ENCODE measurements at regions of chr18 and their contacts with region 1.

Region 1: GRCh38 chr18:13800505-13801259 is 23.3 kb upstream of the MC5R start:
- DNase-seq: peak; percentile 55
- ATAC-seq: peak; percentile 98
- H3K4me3 ChIP-seq: peak overlapping the region; percentile 22 to 49
- H3K27ac ChIP-seq: no peak overlapping the region
- H3K4me1 ChIP-seq: peaks cover 16 to 27% of the 10 kb centered on the region in 2 experiments
- H3K27me3 ChIP-seq: no peaks in the 10 kb centered on the region
- CTCF ChIP-seq: peak; percentile 55 to 66 (median 63); a peak in 5 of 6 replicates
- POLR2A ChIP-seq: no peak
- RAD21 ChIP-seq: peak; percentile 76

Region 2: DNA sequence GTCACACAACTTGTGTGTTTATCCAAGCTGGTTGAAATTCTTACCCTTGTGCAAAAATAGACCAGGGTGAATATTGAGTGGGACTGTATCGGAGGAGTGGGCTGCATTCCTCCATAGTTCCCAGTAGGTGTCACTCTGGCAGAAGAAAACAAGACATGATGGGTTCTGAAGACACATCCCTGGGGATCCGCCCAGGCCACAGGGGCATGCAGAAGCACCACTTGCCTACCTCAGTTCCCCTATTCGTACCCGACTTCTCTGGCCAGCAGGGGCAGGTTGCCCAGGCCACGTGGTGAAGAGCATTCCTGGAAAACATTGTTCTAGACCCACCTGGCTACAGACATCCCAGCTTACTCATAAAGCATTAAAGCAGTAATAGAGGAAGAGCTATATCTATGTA is 242.6 kb before region 1 on chr18:
- CTCF ChIA-PET with region 1: interaction called, 3 read pairs
- POLR2A ChIA-PET with region 1: no interaction called
- RAD21 ChIA-PET with region 1: interaction called in 1 of 2 experiments, 6 read pairs
- intact Hi-C with region 1: loop called (anchors 5 kb)
- DNase-seq: peak; percentile 31
- ATAC-seq: peak; percentile 99
- H3K4me3 ChIP-seq: no peak overlapping the region
- H3K27ac ChIP-seq: no peak overlapping the region
- H3K4me1 ChIP-seq: no peaks in the 10 kb centered on the region
- H3K27me3 ChIP-seq: peaks cover 15% of the 10 kb centered on the region
- CTCF ChIP-seq: peak; percentile 52 to 74 (median 70); a peak in 5 of 6 replicates
- POLR2A ChIP-seq: no peak
- RAD21 ChIP-seq: peak; percentile 68

Region 3: DNA sequence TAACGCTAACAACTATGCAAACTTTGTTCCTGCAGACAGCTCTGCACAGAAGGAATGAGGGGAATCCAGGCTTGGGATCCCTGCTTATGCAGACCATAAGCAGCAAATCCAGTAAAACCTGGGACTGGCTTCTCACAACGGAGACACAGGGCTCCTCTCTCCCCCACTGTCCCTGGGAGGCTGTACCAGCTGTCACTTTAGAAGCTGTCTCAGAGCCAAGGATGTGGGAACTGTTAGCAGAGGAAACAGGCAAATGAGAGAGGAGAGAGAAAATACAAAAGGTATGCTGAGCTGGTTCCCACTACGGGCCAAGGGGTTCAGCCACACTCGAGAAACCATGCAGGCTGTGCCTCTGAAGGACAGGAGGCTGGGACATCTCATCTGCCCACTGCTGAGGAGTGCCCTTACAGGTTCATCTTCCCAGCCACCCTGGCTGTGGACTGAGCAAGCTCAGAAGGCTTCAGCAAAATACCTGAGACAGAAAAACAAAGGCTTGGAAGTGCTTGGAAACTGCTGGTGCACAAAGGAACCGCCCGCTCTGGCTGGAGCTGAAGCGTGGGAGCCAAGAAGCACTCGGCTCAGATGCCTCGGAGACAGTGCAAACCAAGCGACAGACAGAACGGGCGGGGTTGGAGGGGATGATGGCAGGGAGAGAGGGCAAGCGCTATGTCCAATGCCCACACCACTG is 146.8 kb before region 1 on chr18:
- CTCF ChIA-PET with region 1: no interaction called
- POLR2A ChIA-PET with region 1: no interaction called
- RAD21 ChIA-PET with region 1: no interaction called
- intact Hi-C with region 1: no loop called
- DNase-seq: no peak
- ATAC-seq: no peak
- H3K4me3 ChIP-seq: no peak overlapping the region
- H3K27ac ChIP-seq: no peak overlapping the region
- H3K4me1 ChIP-seq: no peaks in the 10 kb centered on the region
- H3K27me3 ChIP-seq: no peaks in the 10 kb centered on the region
- CTCF ChIP-seq: no peak
- POLR2A ChIP-seq: no peak
- RAD21 ChIP-seq: no peak

Measured in HCT116 (cell line).